PC-3 (cell line): ENCODE measurements at regions of chr6 and their contacts with region 1.

Region 1: DNA sequence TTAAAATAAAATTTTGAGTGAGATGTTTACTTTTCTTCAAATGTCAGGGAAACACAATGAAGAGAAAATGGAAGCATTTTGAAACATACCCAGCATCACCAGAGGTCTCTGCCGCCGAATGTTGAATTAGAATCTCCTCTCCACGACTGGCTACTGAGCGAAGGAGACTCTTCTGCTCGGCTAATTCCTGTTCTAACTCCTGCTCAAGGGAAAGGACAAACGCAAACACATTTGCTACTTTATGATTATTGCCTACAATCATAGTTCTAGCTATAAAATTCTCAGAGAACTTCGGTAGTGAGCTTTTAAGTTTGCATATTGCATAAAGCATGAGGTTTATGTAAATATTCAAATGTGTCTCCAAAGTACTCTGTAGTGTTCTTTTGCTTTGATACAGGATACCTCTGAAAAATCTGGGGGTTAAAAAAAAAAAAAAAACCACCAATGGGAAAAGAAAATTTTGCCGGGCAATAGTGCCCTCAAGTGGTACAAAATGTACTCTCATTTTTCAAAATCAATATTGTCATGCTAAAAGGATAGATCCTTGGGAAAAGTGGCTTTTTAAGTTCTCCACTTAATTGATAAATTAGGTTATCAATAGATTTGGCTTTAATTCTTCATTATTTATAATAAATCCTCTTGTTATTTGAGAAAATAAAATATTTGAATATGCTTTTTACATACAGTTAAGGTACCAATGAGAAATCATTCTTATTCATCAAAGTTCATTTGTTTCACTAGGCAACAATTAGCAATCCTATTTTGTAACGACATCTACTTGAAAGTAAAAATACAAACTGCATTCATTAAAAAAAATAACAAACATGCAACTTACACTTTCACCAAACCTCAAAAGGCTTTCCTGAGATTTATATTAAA is 369.0 kb downstream of the SYNE1 start:
- DNase-seq: peak; percentile 69
- ATAC-seq: no peak
- H3K4me3 ChIP-seq: no peak overlapping the region
- H3K27ac ChIP-seq: no peak overlapping the region
- H3K4me1 ChIP-seq: peaks cover 39% of the 10 kb centered on the region
- H3K27me3 ChIP-seq: no peaks in the 10 kb centered on the region
- CTCF ChIP-seq: peak; percentile 66

Region 2: DNA sequence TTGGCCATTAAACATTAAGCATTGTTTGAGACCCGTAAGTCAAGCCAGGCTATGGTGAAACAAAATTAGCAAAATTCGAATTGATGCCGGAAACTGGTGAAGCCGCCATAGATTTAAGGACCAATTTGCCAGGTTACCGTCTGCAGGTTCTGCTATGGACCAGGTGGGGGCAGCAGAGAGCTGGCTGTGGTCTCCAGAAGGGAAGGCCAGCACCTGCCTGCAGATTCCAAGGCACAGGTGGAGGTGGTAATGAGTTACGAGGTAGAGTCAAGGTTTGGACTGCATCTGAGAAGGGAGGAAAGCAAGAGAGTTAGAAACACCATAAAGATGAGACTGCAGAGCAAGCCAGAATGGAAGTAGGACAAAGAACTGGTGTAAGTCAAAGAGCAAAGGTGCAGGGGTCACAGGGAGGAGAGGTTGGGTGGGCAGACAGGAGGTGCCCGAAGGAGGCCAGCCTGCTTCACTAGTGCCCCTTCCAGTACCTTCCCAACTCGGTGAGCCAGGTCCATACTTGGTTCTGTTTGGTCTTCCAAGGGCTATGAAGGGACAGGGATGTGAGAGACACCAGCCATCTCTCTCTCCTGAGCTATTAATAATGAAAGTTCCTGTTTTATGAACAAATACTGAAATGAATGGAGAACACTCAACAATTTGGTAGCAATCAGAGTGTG is 592.3 kb before region 1 on chr6:
- CTCF ChIA-PET with region 1: no interaction called
- POLR2A ChIA-PET with region 1: no interaction called
- intact Hi-C with region 1: loop called (anchors 1 kb)
- DNase-seq: peak; percentile 67
- ATAC-seq: peak; percentile 58; the same call in 1 of the 2 replicates
- H3K4me3 ChIP-seq: 0 out of 2 replicates have a peak overlapping the region, but pooled peaks have one; percentile 26
- H3K27ac ChIP-seq: no peak overlapping the region
- H3K4me1 ChIP-seq: peaks cover 7% of the 10 kb centered on the region; the same call in 1 of the 2 replicates
- H3K27me3 ChIP-seq: no peaks in the 10 kb centered on the region
- CTCF ChIP-seq: peak; percentile 91

Region 3: GRCh38 chr6:152124429-152125074 is 143.7 kb before region 1 on chr6:
- CTCF ChIA-PET with region 1: no interaction called
- POLR2A ChIA-PET with region 1: no interaction called
- intact Hi-C with region 1: loop called (anchors 1 kb)
- DNase-seq: peak; percentile 78
- ATAC-seq: no peak
- H3K4me3 ChIP-seq: no peak overlapping the region
- H3K27ac ChIP-seq: no peak overlapping the region
- H3K4me1 ChIP-seq: peaks cover 10% of the 10 kb centered on the region
- H3K27me3 ChIP-seq: no peaks in the 10 kb centered on the region
- CTCF ChIP-seq: peak; percentile 83

Region 4: GRCh38 chr6:152206072-152206818 is 62.0 kb before region 1 on chr6:
- CTCF ChIA-PET with region 1: no interaction called
- POLR2A ChIA-PET with region 1: no interaction called
- intact Hi-C with region 1: loop called (anchors 5 kb)
- DNase-seq: peak; percentile 9
- ATAC-seq: no peak
- H3K4me3 ChIP-seq: no peak overlapping the region
- H3K27ac ChIP-seq: no peak overlapping the region
- H3K4me1 ChIP-seq: peaks cover 22% of the 10 kb centered on the region
- H3K27me3 ChIP-seq: no peaks in the 10 kb centered on the region
- CTCF ChIP-seq: peak; percentile 59